Ascending aorta (tissue), 2 donors: ENCODE measurements at regions of chr5 and their contacts with region 1.

Region 1: GRCh38 chr5:140401362-140402257 is at the start of gene ANKHD1:
- DNase-seq: peak; percentile 99 to 100
- H3K4me3 ChIP-seq: peak within 1 kb of the TSS; percentile 81 to 95
- H3K27ac ChIP-seq: peak within 1 kb of the TSS; percentile 98 to 99
- H3K4me1 ChIP-seq: peaks cover 4 to 32% of the 10 kb centered on the region in 2 donors
- H3K27me3 ChIP-seq: no peaks in the 10 kb centered on the region
- CTCF ChIP-seq: no peak
- total RNA-seq, gene ANKHD1: 73.4 TPM

Region 2: GRCh38 chr5:140107312-140108083 is 294.1 kb before region 1 on chr5:
- intact Hi-C with region 1: loop called (anchors 5 kb)
- DNase-seq: peak; percentile 46 to 94
- H3K4me3 ChIP-seq: peak overlapping the region; percentile 73 to 85
- H3K27ac ChIP-seq: peak overlapping the region; percentile 96 to 97
- H3K4me1 ChIP-seq: peaks cover 3 to 17% of the 10 kb centered on the region in 2 donors
- H3K27me3 ChIP-seq: no peaks in the 10 kb centered on the region
- CTCF ChIP-seq: peak in 2 of 3 experiments; percentile 25 to 37

Region 3: GRCh38 chr5:140141241-140141640 is 260.4 kb before region 1 on chr5:
- intact Hi-C with region 1: no loop called
- DNase-seq: no peak
- H3K4me3 ChIP-seq: no peak overlapping the region
- H3K27ac ChIP-seq: no peak overlapping the region
- H3K4me1 ChIP-seq: peaks cover 7 to 18% of the 10 kb centered on the region in 2 donors
- H3K27me3 ChIP-seq: no peaks in the 10 kb centered on the region
- CTCF ChIP-seq: no peak

Region 4: DNA sequence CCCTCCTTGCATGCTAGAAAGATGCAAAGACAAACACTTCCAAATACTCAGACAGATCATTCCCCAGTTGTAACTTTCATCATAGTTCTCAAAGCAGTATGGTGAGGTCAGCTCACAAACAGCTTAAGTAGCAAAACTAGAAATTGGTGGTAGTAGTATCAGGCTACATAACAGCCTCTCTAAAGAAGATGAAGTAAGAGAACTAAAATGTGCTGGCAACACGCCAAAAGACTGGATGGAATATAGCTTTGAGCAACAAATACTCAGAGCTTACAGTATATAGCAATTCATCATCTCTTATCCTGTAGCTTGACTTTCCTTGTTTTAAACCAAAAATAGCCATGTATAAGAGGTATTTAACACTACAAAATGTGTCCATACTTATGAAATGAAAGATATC is 106.2 kb before region 1 on chr5:
- intact Hi-C with region 1: loop called (anchors 2 kb)
- DNase-seq: peak in 1 of 2 donors; percentile 84
- H3K4me3 ChIP-seq: no peak overlapping the region
- H3K27ac ChIP-seq: peak overlapping the region; percentile 52 to 74
- H3K4me1 ChIP-seq: peaks cover 0 to 48% of the 10 kb centered on the region in 2 donors
- H3K27me3 ChIP-seq: no peaks in the 10 kb centered on the region
- CTCF ChIP-seq: no peak

Region 5: GRCh38 chr5:140381972-140382371 is 19.6 kb before region 1 on chr5:
- intact Hi-C with region 1: no loop called
- DNase-seq: no peak
- H3K4me3 ChIP-seq: no peak overlapping the region
- H3K27ac ChIP-seq: no peak overlapping the region
- H3K4me1 ChIP-seq: no peaks in the 10 kb centered on the region
- H3K27me3 ChIP-seq: no peaks in the 10 kb centered on the region
- CTCF ChIP-seq: no peak

Region 6: GRCh38 chr5:140564196-140565023 is 162.8 kb after region 1 on chr5 and contains the starts of genes APBB3 and SLC35A4:
- intact Hi-C with region 1: loop called (anchors 2 kb)
- DNase-seq: peak; percentile 96 to 99
- H3K4me3 ChIP-seq: peak within 1 kb of the TSS; percentile 88 to 92
- H3K27ac ChIP-seq: peak within 1 kb of the TSS; percentile 92 to 93
- H3K4me1 ChIP-seq: peaks cover 16 to 24% of the 10 kb centered on the region in 2 donors
- H3K27me3 ChIP-seq: no peaks in the 10 kb centered on the region
- CTCF ChIP-seq: no peak
- total RNA-seq, gene APBB3: 47.3 TPM
- total RNA-seq, gene SLC35A4: 46.2 TPM

Region 7: DNA sequence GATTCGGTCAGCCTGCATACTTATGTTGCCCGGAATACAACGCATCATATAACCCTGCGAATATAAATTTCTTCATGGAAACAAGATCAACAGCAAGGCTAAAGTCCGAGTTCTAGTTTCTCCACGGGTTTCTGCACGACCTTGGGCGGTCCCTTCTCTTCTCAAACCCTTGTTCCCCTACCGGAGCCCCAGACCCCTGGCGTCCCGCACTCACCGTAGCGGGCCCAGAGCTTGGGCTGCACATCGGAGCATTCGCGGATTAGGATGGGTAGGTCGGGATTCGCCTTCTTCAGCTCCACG is 245.4 kb after region 1 on chr5:
- intact Hi-C with region 1: loop called (anchors 1 kb)
- DNase-seq: peak in 1 of 2 donors; percentile 61
- H3K4me3 ChIP-seq: peak overlapping the region; percentile 88 to 90
- H3K27ac ChIP-seq: peak overlapping the region; percentile 79 to 83
- H3K4me1 ChIP-seq: peaks cover 12 to 14% of the 10 kb centered on the region in 2 donors
- H3K27me3 ChIP-seq: no peaks in the 10 kb centered on the region
- CTCF ChIP-seq: no peak

Region 8: GRCh38 chr5:140690941-140691924 is 289.6 kb after region 1 on chr5 and contains the starts of genes HARS1 and HARS2:
- intact Hi-C with region 1: loop called (anchors 5 kb)
- DNase-seq: peak; percentile 58 to 94
- H3K4me3 ChIP-seq: peak within 1 kb of the TSS; percentile 60 to 86
- H3K27ac ChIP-seq: peak within 1 kb of the TSS; percentile 76 to 81
- H3K4me1 ChIP-seq: peaks cover 4 to 25% of the 10 kb centered on the region in 2 donors
- H3K27me3 ChIP-seq: no peaks in the 10 kb centered on the region
- CTCF ChIP-seq: peak in 1 of 3 experiments; percentile 12
- total RNA-seq, gene HARS1: 68.6 TPM
- total RNA-seq, gene HARS2: 10.7 TPM